Ascending aorta (tissue), 2 donors: ENCODE measurements at regions of chr9 and their contacts with region 1.

Region 1: DNA sequence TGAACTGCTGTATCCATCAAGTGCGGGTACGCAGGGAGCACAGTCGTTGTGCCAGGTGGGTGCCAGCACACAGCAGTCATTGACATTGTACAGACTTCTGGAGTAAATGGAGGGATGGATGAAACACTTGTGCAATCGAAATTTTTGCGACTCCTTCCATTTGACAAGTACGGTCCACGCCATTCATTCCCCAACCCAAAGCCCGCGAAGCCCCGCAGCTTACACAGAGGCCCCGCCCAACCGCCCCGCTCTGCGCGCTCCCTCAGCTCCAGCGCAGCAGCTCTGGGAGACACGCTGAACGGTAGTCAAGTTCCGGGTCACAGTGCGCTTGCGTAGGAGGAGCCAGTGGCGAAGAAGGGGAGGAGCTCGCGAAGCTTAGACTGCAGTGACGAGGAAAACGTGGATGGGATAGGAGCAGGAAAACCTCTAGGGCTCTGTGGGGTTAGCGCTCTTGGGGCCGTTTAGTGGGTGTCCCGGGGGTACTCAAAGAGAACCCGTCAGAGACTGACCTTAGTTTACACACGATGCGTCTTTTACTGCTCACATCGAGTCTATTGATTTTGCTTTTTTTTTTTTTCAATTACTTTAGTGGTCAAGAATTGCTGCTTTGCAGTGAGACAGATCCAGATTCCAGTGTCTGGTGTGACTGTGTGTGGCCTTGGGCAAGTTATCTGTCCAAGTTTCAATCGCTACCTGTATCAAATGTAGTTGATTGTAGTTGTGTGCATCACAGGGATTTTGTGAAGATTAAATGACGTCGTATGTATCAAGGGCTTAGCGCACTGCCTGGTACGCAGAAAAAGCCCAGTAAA is 15.3 kb upstream of the MSANTD3 start:
- DNase-seq: peak; percentile 44 to 94
- H3K4me3 ChIP-seq: peak overlapping the region; percentile 60 to 78
- H3K27ac ChIP-seq: no peak overlapping the region
- H3K4me1 ChIP-seq: no peaks in the 10 kb centered on the region
- H3K27me3 ChIP-seq: no peaks in the 10 kb centered on the region
- CTCF ChIP-seq: no peak

Region 2: DNA sequence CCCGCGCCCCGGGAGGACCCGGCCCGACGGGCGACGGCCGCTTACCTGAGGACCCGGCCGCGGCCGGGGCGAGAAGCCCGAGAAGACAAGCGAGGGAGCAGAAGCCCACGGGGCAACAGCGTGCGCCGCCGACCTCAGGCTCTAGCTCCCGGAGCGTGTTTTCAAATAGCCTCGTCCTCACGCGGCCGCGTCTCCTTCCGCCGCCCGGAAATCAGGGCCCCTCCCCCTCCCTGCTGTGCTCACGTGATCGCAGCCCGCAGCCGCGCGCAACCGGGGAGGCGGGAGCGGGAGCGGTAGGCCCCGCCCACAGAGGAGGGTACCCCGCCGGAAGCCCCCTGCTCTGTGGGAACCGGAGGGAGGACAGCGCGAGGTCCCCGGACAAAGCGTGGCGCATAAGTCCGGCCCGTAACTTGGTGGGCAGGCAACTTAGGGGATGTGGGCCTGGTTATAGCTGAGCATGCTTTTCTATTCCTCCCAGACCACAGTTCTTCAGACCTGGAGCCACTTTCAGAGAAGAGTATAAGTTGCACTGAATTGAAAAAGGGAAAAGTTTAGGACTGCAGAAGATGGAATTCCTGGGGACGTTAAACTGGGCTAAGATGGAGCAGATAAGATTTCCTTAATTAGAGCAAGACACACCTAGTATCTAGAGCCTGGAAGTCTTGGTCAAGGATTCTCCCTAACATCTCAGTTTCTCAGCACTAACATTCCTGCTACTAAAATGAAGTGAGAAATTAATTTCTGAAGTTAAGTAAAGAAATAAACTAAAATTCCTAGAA is 58.8 kb before region 1 on chr9 and contains the start of gene TEX10:
- intact Hi-C with region 1: loop called (anchors 2 kb)
- DNase-seq: peak; percentile 18 to 93
- H3K4me3 ChIP-seq: peak within 1 kb of the TSS; percentile 97
- H3K27ac ChIP-seq: peak within 1 kb of the TSS; percentile 78 to 85
- H3K4me1 ChIP-seq: peaks cover 3% of the 10 kb centered on the region in 2 donors
- H3K27me3 ChIP-seq: no peaks in the 10 kb centered on the region
- CTCF ChIP-seq: no peak
- total RNA-seq, gene TEX10: 2.3 TPM

Region 3: GRCh38 chr9:100379862-100380261 is 31.8 kb before region 1 on chr9:
- intact Hi-C with region 1: no loop called
- DNase-seq: no peak
- H3K4me3 ChIP-seq: no peak overlapping the region
- H3K27ac ChIP-seq: no peak overlapping the region
- H3K4me1 ChIP-seq: no peaks in the 10 kb centered on the region
- H3K27me3 ChIP-seq: no peaks in the 10 kb centered on the region
- CTCF ChIP-seq: no peak

Region 4: DNA sequence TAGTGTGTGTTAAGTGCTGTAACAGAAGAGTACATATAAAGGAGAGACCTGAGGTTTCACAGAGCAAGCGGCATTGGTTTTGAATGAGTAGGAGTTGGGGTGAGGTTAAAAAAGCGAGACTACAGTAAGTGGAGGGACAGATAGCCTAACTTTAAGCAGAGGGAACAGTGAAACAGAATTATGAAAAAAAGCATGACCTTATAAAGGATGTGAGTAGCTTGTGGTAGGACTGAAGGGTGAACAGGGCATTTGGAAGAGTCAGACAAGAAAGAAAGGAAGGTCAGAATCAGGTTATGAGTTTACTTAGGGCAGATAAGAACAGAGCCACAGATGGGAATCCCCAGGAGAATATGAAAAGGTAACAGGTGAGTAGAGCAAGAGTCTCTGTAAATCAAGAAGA is 37.7 kb after region 1 on chr9:
- intact Hi-C with region 1: no loop called
- DNase-seq: no peak
- H3K4me3 ChIP-seq: no peak overlapping the region
- H3K27ac ChIP-seq: no peak overlapping the region
- H3K4me1 ChIP-seq: no peaks in the 10 kb centered on the region
- H3K27me3 ChIP-seq: no peaks in the 10 kb centered on the region
- CTCF ChIP-seq: no peak